K562 (cell line): ENCODE measurements at regions of chr6 and their contacts with region 1.

Region 1: DNA sequence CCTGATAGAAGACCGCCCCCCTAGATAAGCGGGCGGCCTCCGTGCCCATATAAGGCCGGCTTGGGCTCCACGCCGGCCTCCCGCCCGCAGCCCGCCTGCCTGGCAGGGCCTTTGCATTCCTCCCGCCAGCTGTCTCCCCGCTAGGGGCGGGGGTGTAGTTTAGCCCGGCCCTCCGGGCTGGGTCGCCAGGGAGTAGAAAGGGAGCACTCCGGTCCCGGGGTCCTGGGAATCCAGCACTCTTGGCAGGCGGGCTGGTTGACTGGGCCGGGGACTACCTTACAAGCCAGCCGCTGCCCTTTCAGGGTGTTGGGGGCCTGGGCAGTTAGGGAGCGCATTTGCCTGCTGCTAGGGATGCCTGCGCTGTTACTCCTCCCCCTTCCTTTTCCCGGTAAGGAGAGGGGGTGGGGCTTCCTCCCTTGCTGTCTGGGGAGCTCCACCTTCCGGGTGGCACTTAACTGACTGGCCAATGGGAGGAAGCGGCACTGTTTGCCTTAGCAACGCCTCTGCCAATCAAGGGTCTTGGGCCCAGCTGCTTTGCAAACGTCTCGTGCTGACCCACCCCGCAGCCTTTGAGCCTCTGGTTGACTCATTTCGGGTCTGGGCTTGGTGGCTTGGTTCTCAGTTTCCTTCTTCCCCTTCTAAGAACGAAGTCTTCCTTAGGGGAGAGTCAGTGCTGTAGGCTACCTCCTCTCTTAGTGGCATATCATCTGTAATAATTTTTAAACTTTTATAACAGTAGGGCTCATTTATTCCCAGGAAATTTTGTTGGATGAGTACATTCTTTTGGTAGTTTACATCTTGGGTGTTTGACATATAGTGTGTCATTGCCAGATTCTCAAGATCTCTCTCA is 3.4 kb downstream of the SRF start:
- DNase-seq: peak; percentile 99 to 100 (median 99)
- ATAC-seq: peak; percentile 81
- H3K4me3 ChIP-seq: peak overlapping the region; percentile 17; the same call in 1 of the 2 replicates
- H3K27ac ChIP-seq: peak overlapping the region; percentile 21
- H3K4me1 ChIP-seq: peaks cover 30 to 53% of the 10 kb centered on the region in 2 experiments
- H3K27me3 ChIP-seq: no peaks in the 10 kb centered on the region
- CTCF ChIP-seq: no peak
- EP300 ChIP-seq: no peak
- POLR2A ChIP-seq: 0 out of 2 replicates have a peak, but pooled peaks have one; percentile 45
- RAD21 ChIP-seq: no peak; a peak in 1 of 4 replicates

Region 2: DNA sequence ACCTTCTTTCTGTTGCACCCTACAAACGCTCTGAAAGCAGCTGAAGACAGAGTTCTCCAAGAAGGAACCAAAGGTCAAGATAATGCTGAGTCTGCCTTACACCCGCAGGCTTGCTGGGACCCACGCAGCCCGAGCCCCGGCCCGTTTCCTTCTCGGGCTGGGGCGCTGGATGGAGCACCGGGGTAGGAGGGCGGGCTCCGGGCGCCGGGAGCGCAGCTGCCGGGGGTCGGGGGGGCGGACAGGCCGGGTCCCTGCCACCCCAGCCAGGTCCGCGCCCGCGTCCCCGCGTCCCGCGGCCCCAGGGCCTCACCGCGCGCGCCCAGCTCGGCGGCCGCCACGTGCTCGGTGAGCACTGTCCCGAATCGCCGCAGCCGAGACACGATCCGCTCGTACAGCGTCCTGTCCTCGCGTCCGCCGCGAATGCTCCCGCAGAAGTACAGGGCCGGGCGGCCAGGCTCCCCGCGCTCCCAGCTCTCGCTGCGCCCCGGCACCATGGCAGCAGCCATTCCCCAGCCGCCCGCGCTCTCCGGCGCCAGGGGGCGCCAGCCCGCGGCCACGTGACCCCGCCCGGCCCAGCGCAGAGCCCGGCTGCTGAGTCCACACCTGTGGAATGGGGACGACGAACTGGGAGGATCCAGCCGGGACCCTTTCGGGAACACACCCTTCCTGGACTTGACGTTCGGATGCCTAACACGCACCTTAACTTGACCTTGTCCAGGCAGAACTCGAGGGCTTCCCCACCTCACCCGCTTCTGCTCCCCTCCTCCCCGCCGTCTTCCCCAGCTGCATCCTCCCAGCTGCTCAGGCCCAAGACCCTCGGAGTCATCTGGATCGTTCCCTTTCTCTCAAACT is 54.7 kb after region 1 on chr6 and contains the start of gene DNPH1:
- CTCF ChIA-PET with region 1: no interaction called
- POLR2A ChIA-PET with region 1: interaction called, 5 read pairs
- in situ Hi-C with region 1: no loop called
- intact Hi-C with region 1: loop called (anchors 2 kb)
- DNase-seq: peak; percentile 87 to 94 (median 91)
- ATAC-seq: peak; percentile 97
- H3K4me3 ChIP-seq: peak within 1 kb of the TSS; percentile 81
- H3K27ac ChIP-seq: peak within 1 kb of the TSS; percentile 89
- H3K4me1 ChIP-seq: peaks cover 17 to 33% of the 10 kb centered on the region in 2 experiments; a peak in 4 of 5 replicates
- H3K27me3 ChIP-seq: no peaks in the 10 kb centered on the region
- CTCF ChIP-seq: peak; percentile 87 to 91 (median 88)
- EP300 ChIP-seq: no peak
- POLR2A ChIP-seq: peak; percentile 82
- RAD21 ChIP-seq: peak; percentile 48 to 67
- polyA plus RNA-seq, gene DNPH1: 7.3 to 13.9 TPM

Region 3: DNA sequence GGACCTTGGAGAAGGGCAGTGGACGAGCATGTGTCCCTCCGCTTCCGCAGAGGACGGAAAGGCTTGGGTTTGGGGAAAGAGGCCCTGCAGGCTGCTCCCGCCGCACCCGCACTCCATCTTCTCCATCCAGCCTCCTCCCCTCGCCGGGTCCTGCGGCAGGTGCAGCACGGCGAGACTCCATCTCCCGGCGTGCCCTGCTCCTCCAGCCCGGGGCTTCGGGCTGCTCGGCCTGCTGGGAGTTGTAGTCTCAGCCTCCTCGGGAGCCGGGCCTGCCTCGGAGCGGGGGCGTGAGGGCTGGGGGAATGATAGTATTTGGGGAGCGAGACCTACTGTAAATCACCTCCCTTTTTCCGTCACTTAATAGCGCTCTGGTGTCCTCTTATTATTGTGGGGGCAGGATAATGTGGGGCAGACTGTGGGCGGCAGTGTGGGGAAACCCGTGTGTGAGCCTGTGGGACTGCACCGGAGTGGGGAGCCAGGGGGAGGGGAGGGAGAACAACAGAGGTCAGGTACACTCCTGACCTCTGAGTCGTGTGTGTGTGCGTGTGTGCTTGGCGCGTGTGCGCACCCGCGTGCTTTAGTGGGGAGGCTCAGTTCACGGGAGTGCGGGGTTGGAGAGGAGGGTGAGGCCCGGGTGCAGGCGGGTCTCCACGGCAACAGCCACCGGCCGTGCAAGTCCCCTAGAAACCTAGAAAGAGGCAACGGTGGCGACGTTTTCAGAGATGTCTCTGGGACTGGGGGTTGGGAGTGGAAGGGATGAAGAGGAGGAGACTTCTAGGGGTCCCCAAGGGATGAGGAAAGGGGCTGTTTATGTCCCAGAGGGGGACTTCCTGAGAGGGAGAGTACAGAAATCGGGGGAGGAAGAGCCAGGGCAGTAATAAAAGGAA is 72.9 kb after region 1 on chr6:
- CTCF ChIA-PET with region 1: no interaction called
- POLR2A ChIA-PET with region 1: interaction called, 6 read pairs
- in situ Hi-C with region 1: no loop called
- intact Hi-C with region 1: loop called (anchors 5 kb)
- DNase-seq: peak; percentile 83 to 94 (median 93)
- ATAC-seq: peak; percentile 99
- H3K4me3 ChIP-seq: peak overlapping the region; percentile 39
- H3K27ac ChIP-seq: no peak overlapping the region
- H3K4me1 ChIP-seq: peaks cover 10 to 24% of the 10 kb centered on the region in 2 experiments
- H3K27me3 ChIP-seq: peaks cover 54 to 82% of the 10 kb centered on the region in 2 experiments
- CTCF ChIP-seq: peak in 1 of 3 experiments; percentile 0; a peak in 1 of 6 replicates
- EP300 ChIP-seq: no peak
- POLR2A ChIP-seq: no peak
- RAD21 ChIP-seq: no peak

Region 4: GRCh38 chr6:43369174-43370022 is 194.9 kb after region 1 on chr6 and contains the start of gene ZNF318:
- CTCF ChIA-PET with region 1: no interaction called
- POLR2A ChIA-PET with region 1: interaction called, 4 read pairs
- in situ Hi-C with region 1: no loop called
- intact Hi-C with region 1: loop called (anchors 5 kb)
- DNase-seq: peak; percentile 95 to 99 (median 98)
- ATAC-seq: peak; percentile 97
- H3K4me3 ChIP-seq: peak within 1 kb of the TSS; percentile 71
- H3K27ac ChIP-seq: peak within 1 kb of the TSS; percentile 82
- H3K4me1 ChIP-seq: peaks cover 18 to 23% of the 10 kb centered on the region in 2 experiments; a peak in 4 of 5 replicates
- H3K27me3 ChIP-seq: no peaks in the 10 kb centered on the region
- CTCF ChIP-seq: no peak
- EP300 ChIP-seq: no peak
- POLR2A ChIP-seq: peak; percentile 78
- RAD21 ChIP-seq: no peak
- polyA plus RNA-seq, gene ZNF318: 3.2 to 3.6 TPM